Head of caudate nucleus (tissue), 42 donors: ENCODE measurements at regions of chr3 and their contacts with region 1.

Region 1: GRCh38 chr3:11643605-11644087 is at the start of gene VGLL4:
- DNase-seq: peak; percentile 84 to 97 (median 93)

Region 2: DNA sequence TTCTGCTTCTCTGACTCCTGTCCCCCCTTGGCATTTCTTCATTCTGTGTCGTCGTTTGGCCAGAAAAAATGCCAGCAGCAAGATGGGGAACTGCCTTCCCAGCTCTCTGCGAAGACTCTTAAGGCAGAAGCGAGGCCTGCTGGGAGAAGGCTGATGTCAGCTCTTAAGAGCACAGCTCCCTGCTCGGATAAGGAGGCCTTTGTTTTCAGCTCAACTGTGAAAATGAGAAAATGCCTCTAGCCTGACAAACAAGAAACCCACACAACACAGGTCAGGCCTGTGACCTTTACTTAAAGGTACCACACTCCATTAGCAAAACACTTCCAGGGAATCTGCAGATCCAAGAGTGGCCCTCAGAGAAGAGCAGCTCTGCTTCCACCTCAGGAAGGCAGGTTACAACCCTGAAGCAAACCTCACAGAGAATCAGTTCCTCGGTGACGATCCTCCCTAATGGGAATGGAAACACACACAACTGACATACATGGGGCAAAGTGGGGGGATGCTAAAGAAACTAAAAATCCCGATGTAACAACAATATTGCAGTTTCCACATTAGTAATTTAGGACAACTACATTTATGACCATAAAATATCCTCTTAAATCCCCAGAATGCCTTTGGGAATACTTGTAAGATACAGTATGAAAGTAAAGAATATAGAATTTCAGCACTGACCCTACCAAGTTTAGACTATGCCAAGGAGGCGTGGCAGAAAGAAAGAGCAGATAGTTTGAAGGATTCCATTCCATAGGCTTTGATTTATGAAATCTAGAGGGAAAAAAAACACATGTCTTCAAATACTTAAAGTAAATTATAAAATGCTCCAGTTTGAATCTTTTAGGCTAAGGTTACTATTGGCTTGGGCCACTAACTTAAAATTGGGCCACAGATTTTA is 52.0 kb before region 1 on chr3:
- intact Hi-C with region 1: loop called (anchors 5 kb)
- DNase-seq: peak; percentile 47 to 93 (median 81)

Region 3: DNA sequence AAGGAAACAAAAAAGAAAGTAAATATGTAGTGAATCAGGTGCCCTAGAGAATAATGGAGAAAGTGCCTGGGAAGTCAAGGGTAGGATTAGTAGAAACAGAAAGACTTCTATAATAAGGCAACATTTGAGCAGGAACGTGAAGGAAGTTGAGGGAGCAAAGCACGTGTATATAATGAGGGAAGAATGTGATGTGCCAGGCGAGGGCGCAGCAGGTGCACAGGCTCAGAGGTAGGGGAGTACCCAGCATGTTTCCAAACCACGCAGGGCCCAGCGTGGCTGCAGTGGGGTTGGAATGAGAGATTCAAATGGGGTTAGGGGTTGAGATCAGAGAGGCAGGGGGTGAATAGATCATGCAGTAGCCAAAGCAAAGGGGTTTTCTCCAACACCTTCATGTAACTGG is 92.0 kb after region 1 on chr3:
- intact Hi-C with region 1: no loop called
- DNase-seq: no peak